OCI-LY7 (cell line): ENCODE measurements at regions of chrX and their contacts with region 1.

Region 1: DNA sequence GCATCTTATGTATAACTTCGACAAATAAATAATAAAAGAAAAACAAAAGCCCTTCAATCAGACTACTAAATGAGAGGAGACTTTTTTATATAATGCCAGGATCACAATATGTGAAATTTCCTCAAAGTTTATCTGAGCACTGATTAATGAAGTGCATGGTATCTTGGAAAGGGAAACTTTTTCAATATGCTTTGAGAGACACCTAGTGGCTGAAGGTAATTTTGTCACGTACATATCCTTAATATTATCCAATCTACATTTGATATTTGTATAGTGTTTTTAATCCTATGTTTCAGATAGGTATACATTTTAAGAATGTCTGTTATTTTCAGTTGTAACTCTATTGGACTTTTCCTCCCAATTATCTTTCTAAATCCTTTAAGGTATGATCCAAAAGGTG is 146.8 kb downstream of the KLHL4 start:
- DNase-seq: peak; percentile 0
- H3K4me3 ChIP-seq: no peak overlapping the region
- H3K27ac ChIP-seq: no peak overlapping the region
- H3K4me1 ChIP-seq: no peaks in the 10 kb centered on the region
- CTCF ChIP-seq: peak; percentile 67

Region 2: DNA sequence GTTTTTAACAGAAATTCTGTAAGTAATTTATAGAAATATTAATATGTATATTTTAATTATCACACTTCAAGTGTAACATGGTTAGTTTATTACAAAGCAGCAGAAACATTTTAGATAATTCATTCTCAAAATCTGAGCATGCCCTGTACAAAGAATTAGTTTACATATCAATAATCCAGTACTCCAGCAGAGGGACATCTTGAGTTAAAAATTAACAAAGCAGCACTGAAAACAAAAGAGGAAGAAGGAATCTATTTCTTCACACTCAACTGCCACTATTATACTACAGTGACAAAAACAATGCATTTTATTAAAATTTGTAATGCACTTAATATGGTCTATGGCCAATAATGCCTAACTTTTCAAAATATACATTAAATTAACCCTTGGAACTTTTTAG is 325.9 kb before region 1 on chrX:
- CTCF ChIA-PET with region 1: no interaction called
- POLR2A ChIA-PET with region 1: no interaction called
- intact Hi-C with region 1: loop called (anchors 10 kb)
- DNase-seq: peak; percentile 1
- H3K4me3 ChIP-seq: no peak overlapping the region
- H3K27ac ChIP-seq: no peak overlapping the region
- H3K4me1 ChIP-seq: no peaks in the 10 kb centered on the region
- CTCF ChIP-seq: peak; percentile 52; the same call in 1 of the 2 replicates

Region 3: DNA sequence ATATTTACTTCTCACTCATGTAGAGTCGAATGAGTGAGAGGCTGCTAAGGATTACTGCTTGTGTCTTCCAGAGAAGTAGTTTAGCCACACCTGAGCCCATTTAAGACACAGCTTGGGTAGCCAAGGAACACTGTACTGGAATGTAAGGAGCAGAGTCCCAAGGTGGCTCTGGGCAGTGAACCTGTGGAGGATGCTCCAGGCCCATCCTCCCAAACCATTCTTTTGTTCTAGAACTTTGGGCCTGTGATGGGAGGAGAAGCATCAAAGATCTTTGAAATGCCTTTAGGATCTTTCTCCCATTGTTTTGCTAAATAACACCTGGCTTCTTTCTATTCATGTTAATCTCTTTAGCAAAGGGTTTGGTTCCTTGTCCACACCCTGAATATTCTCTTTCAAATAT is 15.5 kb after region 1 on chrX:
- CTCF ChIA-PET with region 1: no interaction called
- POLR2A ChIA-PET with region 1: no interaction called
- intact Hi-C with region 1: no loop called
- DNase-seq: no peak
- H3K4me3 ChIP-seq: no peak overlapping the region
- H3K27ac ChIP-seq: no peak overlapping the region
- H3K4me1 ChIP-seq: no peaks in the 10 kb centered on the region
- CTCF ChIP-seq: no peak